ENCODE measurements at regions of chr7 and their contacts with region 1.

Region 1: DNA sequence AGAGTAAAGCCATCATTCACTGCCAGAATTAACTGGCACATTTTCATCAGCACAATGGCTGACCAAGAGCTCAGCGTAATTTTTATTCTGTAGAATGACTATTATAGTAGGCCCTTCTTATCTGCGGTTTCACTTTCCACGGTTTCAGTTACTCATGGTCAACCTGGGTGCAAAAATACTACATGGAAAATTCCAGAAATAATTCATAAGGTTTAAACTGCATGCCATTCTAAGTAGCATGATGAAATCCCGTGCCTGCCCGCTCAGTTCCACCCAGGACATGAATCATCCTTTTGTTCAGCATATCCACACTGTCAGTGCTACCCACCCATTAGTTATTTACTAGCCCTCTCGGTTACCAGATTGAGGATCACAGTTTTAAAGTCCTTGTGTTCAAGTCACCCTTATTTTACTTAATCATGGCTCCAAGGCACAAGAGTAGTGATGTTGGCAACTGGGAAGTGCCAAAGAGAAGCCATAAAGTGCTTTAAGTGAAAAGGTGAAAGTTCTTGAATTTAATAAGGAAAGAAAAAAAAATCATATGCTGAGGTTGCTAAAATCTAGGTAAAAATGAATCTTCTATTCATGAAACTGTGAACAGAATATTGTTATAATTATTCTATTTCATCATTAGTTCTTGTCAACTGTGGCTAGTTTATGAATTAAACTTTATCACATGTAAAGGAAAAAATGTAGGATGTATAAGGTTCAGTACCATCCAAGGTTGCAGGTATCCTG is 204.9 kb downstream of the DOCK4 start:
- DNase-seq: no peak
- H3K4me3 ChIP-seq: no peak overlapping the region
- H3K27ac ChIP-seq: no peak overlapping the region
- H3K4me1 ChIP-seq: no peaks in the 10 kb centered on the region
- H3K27me3 ChIP-seq: no peaks in the 10 kb centered on the region
- CTCF ChIP-seq: no peak
- POLR2A ChIP-seq: no peak

Region 2: GRCh38 chr7:111833466-111833865 is 167.8 kb before region 1 on chr7:
- intact Hi-C with region 1: loop called (anchors 5 kb)
- DNase-seq: no peak
- H3K4me3 ChIP-seq: no peak overlapping the region
- H3K27ac ChIP-seq: no peak overlapping the region
- H3K4me1 ChIP-seq: no peaks in the 10 kb centered on the region
- H3K27me3 ChIP-seq: no peaks in the 10 kb centered on the region
- CTCF ChIP-seq: no peak
- POLR2A ChIP-seq: no peak